HepG2 (cell line): ENCODE measurements at regions of chr4 and their contacts with region 1.

Region 1: DNA sequence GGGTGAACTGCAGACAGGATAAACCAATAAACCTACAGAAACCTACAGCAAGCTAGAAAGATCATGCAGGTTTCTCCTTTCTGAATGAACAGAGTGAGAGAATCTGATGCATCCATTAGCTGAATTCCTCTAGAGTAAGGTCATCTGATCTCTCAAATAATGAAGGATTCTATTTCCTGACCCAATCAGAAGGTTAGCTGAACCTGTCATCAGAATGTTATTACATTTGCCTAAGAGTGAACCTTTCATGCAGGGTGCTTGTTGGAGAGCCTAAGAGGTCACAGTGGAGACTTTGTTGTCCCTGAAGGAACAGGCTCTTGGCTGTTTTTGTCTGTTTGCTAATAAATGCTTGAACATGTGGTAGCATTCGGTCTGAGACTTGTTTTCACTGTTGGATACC is 24.0 kb downstream of the MEPE start:
- DNase-seq: peak; percentile 37
- ATAC-seq: no peak
- H3K4me3 ChIP-seq: no peak overlapping the region
- H3K27ac ChIP-seq: no peak overlapping the region
- H3K4me1 ChIP-seq: peaks cover 64% of the 10 kb centered on the region
- H3K27me3 ChIP-seq: no peaks in the 10 kb centered on the region
- CTCF ChIP-seq: no peak
- EP300 ChIP-seq: no peak
- POLR2A ChIP-seq: no peak
- RAD21 ChIP-seq: no peak

Region 2: GRCh38 chr4:87973283-87974169 is 116.7 kb after region 1 on chr4:
- CTCF ChIA-PET with region 1: interaction called, 67 read pairs
- POLR2A ChIA-PET with region 1: interaction called, 4 read pairs
- in situ Hi-C with region 1: loop called (anchors 5 kb)
- intact Hi-C with region 1: loop called (anchors 1 kb)
- DNase-seq: peak; percentile 63
- ATAC-seq: peak; percentile 77
- H3K4me3 ChIP-seq: peak overlapping the region in 2 of 3 experiments; percentile 24 to 26; a peak in 2 of 6 replicates
- H3K27ac ChIP-seq: no peak overlapping the region
- H3K4me1 ChIP-seq: peaks cover 64% of the 10 kb centered on the region
- H3K27me3 ChIP-seq: no peaks in the 10 kb centered on the region
- CTCF ChIP-seq: peak; percentile 79
- EP300 ChIP-seq: no peak
- POLR2A ChIP-seq: no peak
- RAD21 ChIP-seq: peak; percentile 73

Region 3: DNA sequence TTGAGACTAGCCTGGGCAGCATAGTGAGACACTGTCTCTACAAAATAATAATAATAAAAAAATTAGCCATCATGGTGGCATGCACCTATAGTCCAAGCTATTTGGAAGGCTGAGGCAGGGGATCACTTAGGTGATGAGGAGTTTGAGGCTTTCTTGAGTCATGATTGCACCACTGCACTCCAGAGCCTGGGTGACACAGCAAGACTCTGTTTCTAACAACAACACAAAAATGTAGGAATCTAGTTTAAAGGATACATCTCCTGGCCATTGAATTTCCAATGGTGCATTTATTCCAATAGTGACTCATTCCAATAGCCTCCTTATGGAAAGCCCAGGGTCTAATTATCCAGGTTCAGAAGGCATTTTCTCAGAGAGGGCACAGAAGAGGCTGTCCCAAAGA is 500.0 kb after region 1 on chr4:
- CTCF ChIA-PET with region 1: no interaction called
- POLR2A ChIA-PET with region 1: no interaction called
- in situ Hi-C with region 1: no loop called
- intact Hi-C with region 1: no loop called
- DNase-seq: no peak
- ATAC-seq: no peak
- H3K4me3 ChIP-seq: no peak overlapping the region
- H3K27ac ChIP-seq: no peak overlapping the region
- H3K4me1 ChIP-seq: no peaks in the 10 kb centered on the region
- H3K27me3 ChIP-seq: 0 out of 5 replicates have a peak, but pooled peaks cover 0 to 3% of the 10 kb centered on the region in 2 experiments
- CTCF ChIP-seq: no peak
- EP300 ChIP-seq: no peak
- POLR2A ChIP-seq: no peak
- RAD21 ChIP-seq: no peak